Colonic mucosa (tissue), 4 donors: ENCODE measurements at regions of chr1 and their contacts with region 1.

Region 1: DNA sequence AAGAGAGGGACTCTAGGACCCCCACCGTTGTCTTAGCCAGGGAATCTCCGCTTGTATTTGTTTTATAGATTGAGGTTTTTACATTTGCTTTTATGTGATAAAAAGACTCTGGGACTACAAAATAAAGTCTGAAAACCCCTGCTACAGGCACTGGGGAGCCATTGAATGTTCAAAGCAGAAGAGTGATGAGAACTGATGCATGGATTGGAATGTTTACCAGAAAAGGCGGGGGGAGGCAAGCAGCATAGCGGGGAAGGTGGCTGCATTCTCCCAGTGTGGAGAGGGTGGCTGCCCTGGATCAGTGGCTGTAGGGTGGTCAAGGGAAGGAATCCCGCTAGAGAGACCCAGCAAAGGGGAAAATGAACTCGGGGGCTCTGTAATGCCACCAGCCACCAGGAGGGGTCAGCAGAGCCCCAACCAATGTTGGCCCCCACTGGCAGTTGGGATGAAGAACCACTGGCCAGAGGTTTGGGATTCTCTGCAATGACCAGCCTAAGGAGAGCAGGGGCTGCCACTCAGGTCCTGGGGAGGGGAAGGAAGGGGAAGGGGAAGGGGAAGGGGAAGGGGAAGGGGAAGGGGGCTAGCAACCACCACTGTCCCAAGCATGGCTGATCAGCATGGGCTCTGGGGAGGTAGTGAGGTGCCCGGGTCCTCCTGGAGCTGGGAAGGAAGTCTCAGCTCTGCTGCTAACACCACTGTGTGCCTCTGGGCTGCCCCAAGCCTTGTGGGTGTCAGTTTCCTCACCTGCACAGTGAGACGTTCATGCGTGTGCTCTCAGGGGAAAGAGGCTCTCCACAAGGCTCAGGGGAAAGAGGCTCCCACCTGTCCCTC is 19.2 kb upstream of the PEF1 start:
- DNase-seq: peak; percentile 65
- H3K4me3 ChIP-seq: no peak overlapping the region
- H3K27ac ChIP-seq: no peak overlapping the region
- H3K4me1 ChIP-seq: peaks cover 5% of the 10 kb centered on the region
- H3K27me3 ChIP-seq: no peaks in the 10 kb centered on the region
- CTCF ChIP-seq: peak; percentile 92

Region 2: GRCh38 chr1:31705080-31705866 is 41.4 kb after region 1 on chr1:
- intact Hi-C with region 1: loop called (anchors 5 kb)
- DNase-seq: peak; percentile 62
- H3K4me3 ChIP-seq: no peak overlapping the region
- H3K27ac ChIP-seq: peak overlapping the region; percentile 67
- H3K4me1 ChIP-seq: peaks cover 14% of the 10 kb centered on the region
- H3K27me3 ChIP-seq: no peaks in the 10 kb centered on the region
- CTCF ChIP-seq: no peak

Region 3: DNA sequence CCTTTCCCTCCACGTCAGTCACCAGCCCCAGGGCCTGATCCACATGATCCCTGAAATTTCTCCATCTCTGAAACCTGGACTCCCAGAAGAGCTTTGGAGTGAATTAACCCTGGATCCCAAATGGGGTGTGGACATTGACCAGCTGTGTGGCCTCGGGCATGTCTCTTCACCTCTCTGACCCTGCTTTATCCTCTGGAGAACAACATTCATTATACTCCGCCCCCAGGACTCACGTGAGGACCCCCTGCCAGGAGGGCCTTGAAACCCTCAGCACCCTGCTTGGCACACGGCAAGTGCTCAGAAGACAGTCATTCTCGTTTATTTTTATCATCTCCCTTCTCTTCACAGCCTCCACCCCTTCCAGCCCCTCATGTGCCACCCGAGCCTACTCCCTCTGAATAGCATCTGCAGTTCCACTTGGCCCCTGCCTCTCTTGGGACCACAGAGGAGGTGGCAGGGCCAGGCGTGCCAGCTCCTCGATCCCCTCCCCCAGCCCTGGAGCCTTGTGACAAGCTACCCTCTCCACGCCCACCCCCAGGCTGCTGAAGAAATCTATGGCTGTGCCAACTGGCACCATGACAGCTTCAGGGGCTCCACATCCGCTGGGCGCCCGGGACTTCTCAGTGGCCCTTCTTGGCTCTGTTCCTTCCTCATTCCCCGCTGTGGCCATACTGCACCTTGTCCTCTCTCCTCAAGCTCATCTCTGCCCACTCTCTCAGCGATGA is 82.3 kb after region 1 on chr1:
- intact Hi-C with region 1: loop called (anchors 2 kb)
- DNase-seq: no peak
- H3K4me3 ChIP-seq: no peak overlapping the region
- H3K27ac ChIP-seq: no peak overlapping the region
- H3K4me1 ChIP-seq: no peaks in the 10 kb centered on the region
- H3K27me3 ChIP-seq: no peaks in the 10 kb centered on the region
- CTCF ChIP-seq: no peak

Region 4: GRCh38 chr1:32684167-32684811 is 1020.5 kb after region 1 on chr1:
- intact Hi-C with region 1: no loop called
- DNase-seq: peak; percentile 50
- H3K4me3 ChIP-seq: no peak overlapping the region
- H3K27ac ChIP-seq: no peak overlapping the region
- H3K4me1 ChIP-seq: peaks cover 7% of the 10 kb centered on the region
- H3K27me3 ChIP-seq: no peaks in the 10 kb centered on the region
- CTCF ChIP-seq: no peak